ACHN (cell line): ENCODE measurements at regions of chr12 and their contacts with region 1.

Region 1: GRCh38 chr12:101939856-101940265 is 62.5 kb downstream of the DRAM1 start:
- DNase-seq: peak; percentile 74

Region 2: DNA sequence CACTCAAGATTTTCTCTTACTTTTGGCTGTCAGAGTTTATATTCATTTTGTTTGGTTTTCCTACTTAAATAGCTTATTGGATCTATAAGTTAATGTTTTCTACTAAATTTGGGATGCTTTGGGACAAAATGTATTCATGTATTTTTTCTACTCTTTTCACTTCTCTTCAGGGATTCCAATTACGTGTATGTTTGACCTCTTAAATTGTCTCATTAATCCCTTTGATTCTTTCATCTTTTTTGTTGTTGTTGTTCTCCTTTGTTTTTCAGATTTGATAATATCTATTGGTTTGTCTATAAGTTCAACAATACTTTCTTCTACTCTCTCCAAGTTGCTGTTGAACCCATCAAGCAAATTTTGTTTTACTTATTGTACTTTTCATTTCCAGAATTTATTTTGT is 223.5 kb after region 1 on chr12:
- in situ Hi-C with region 1: no loop called
- DNase-seq: no peak

Region 3: GRCh38 chr12:102781117-102781516 is 841.3 kb after region 1 on chr12:
- in situ Hi-C with region 1: loop called (anchors 25 kb)
- DNase-seq: no peak